H1 (cell line): ENCODE measurements at regions of chr19 and their contacts with region 1.

Region 1: DNA sequence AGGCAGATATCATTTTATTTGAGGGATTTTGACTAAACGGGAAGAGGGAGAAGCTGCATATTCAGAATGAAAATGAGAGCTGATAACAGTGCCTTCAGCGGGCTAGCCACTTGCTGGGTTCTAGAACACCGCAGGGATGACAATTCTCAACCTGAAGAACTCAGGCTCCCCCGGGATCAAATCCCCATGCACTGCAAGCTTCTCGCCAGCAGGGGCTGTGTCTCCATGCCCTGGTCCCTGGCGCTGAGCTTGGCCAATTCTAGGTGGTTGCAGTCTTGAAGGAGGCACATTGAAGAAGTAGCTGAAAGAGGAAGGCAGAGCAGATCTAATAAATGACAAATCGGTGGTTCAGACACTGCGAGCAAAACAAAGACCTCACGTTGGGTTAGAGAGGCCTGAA is 128.7 kb downstream of the UQCRFS1 start:
- DNase-seq: peak in 1 of 2 experiments; percentile 68
- H3K4me3 ChIP-seq: no peak overlapping the region
- H3K27ac ChIP-seq: no peak overlapping the region
- H3K4me1 ChIP-seq: peaks cover 0 to 5% (median 2%) of the 10 kb centered on the region in 4 experiments; a peak in 4 of 7 replicates
- H3K27me3 ChIP-seq: no peaks in the 10 kb centered on the region
- CTCF ChIP-seq: peak; percentile 54 to 73 (median 70)
- EP300 ChIP-seq: no peak
- POLR2A ChIP-seq: no peak
- RAD21 ChIP-seq: peak; percentile 35 to 60

Region 2: GRCh38 chr19:29029268-29029958 is 54.9 kb before region 1 on chr19:
- CTCF ChIA-PET with region 1: no interaction called
- POLR2A ChIA-PET with region 1: no interaction called
- DNase-seq: no peak
- H3K4me3 ChIP-seq: no peak overlapping the region
- H3K27ac ChIP-seq: no peak overlapping the region
- H3K4me1 ChIP-seq: peaks cover 0 to 2% (median 0%) of the 10 kb centered on the region in 4 experiments; a peak in 1 of 7 replicates
- H3K27me3 ChIP-seq: no peaks in the 10 kb centered on the region
- CTCF ChIP-seq: no peak
- EP300 ChIP-seq: no peak
- POLR2A ChIP-seq: no peak
- RAD21 ChIP-seq: no peak

Region 3: GRCh38 chr19:29060813-29061364 is 23.4 kb before region 1 on chr19:
- CTCF ChIA-PET with region 1: interaction called, 13 read pairs
- POLR2A ChIA-PET with region 1: no interaction called
- DNase-seq: no peak
- H3K4me3 ChIP-seq: no peak overlapping the region
- H3K27ac ChIP-seq: no peak overlapping the region
- H3K4me1 ChIP-seq: peaks cover 1 to 13% (median 8%) of the 10 kb centered on the region in 4 experiments; a peak in 5 of 7 replicates
- H3K27me3 ChIP-seq: no peaks in the 10 kb centered on the region
- CTCF ChIP-seq: no peak
- EP300 ChIP-seq: no peak
- POLR2A ChIP-seq: no peak
- RAD21 ChIP-seq: no peak

Region 4: GRCh38 chr19:29105629-29106292 is 21.5 kb after region 1 on chr19:
- CTCF ChIA-PET with region 1: interaction called, 17 read pairs
- POLR2A ChIA-PET with region 1: no interaction called
- DNase-seq: no peak
- H3K4me3 ChIP-seq: no peak overlapping the region
- H3K27ac ChIP-seq: no peak overlapping the region
- H3K4me1 ChIP-seq: peaks cover 0 to 3% (median under 1%) of the 10 kb centered on the region in 4 experiments; a peak in 2 of 7 replicates
- H3K27me3 ChIP-seq: no peaks in the 10 kb centered on the region
- CTCF ChIP-seq: no peak
- EP300 ChIP-seq: no peak
- POLR2A ChIP-seq: no peak
- RAD21 ChIP-seq: no peak

Region 5: DNA sequence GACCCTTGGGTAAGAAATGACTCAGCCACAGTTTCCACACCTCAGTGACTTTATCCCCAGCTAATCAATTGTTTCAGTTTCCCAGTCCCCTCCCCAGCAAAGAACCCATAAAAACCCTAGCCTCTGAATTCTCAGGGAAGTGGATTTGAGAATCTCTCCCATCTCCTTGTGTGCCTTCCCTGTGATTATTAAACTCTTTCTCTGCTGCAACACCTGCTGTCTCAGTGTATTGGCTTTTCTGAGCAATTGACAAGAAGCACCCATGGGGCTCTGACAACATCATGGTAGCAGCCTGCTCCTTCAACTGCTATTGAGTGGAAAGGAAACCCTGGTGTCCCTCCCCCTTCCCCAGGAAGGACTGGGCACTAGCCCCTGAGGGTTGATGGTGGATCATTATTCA is 55.0 kb after region 1 on chr19:
- CTCF ChIA-PET with region 1: no interaction called
- POLR2A ChIA-PET with region 1: no interaction called
- DNase-seq: no peak
- H3K4me3 ChIP-seq: no peak overlapping the region
- H3K27ac ChIP-seq: no peak overlapping the region
- H3K4me1 ChIP-seq: no peaks in the 10 kb centered on the region
- H3K27me3 ChIP-seq: no peaks in the 10 kb centered on the region; a peak in 1 of 7 replicates
- CTCF ChIP-seq: no peak
- EP300 ChIP-seq: no peak
- POLR2A ChIP-seq: no peak
- RAD21 ChIP-seq: no peak